MCF 10A (cell line): ENCODE measurements at regions of chr4 and their contacts with region 1.

Region 1: DNA sequence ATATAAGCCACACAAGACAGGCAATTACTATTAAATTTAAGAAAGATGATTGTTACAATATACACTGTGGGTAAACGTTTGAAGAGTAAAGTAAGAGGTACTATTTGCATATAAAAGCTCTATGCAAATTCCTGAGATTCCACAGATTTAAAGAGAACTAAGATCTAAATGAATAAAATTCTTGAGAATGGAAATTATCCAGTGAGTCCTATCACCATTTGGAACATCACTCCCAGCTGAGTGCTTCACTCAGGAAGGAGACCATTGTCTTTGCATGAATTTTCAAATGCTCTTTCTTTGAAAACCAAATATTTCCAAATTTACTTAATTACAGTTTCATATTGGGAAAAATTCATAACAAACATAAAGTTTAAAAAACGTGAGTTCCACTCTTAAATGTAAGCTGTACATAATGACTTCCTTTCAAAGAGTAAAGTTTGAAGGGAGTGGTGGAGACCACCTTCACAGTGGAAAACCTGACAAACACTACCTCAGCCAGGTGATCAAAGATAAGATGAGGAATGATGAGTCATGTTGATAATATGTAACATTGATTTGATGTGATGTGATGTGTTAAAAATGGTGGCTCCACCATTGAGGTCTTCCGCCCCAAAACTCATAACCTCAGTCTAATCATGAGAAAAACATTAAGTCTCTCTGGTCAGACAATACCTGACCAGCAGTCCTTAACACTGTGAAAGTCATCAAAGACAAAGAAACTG is 159.9 kb downstream of the BANK1 start:
- DNase-seq: no peak
- H3K4me3 Mint-ChIP-seq: no peak overlapping the region
- H3K27ac Mint-ChIP-seq: no peak overlapping the region
- H3K4me1 Mint-ChIP-seq: peaks cover 27% of the 10 kb centered on the region
- H3K27me3 Mint-ChIP-seq: no peaks in the 10 kb centered on the region
- CTCF ChIP-seq: no peak

Region 2: DNA sequence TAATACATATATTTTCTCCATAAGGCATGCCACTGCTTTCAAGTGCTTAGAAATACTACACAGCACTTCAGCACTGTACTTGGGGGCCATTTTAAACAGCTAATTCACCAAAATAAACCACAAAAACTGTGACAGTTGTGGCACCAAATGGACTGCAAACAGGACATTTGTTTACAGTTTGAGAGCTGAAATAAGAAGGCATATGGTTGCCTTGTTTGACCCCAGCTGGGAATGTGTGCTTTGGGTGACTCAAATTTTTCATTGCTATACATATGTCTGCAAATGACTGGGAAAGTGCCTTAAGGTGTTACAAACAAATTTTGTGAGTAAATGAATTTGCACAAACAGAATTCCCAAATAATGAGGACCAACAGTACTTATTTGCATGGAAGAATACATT is 35.7 kb before region 1 on chr4:
- CTCF ChIA-PET with region 1: no interaction called
- POLR2A ChIA-PET with region 1: no interaction called
- intact Hi-C with region 1: loop called (anchors 1 kb)
- DNase-seq: no peak
- H3K4me3 Mint-ChIP-seq: no peak overlapping the region
- H3K27ac Mint-ChIP-seq: no peak overlapping the region
- H3K4me1 Mint-ChIP-seq: no peaks in the 10 kb centered on the region
- H3K27me3 Mint-ChIP-seq: no peaks in the 10 kb centered on the region
- CTCF ChIP-seq: no peak